BJ (cell line): ENCODE measurements at regions of chr12 and their contacts with region 1.

Region 1: GRCh38 chr12:27751386-27752047 is 28.5 kb upstream of the KLHL42 start:
- DNase-seq: no peak
- H3K4me3 ChIP-seq: no peak overlapping the region
- H3K27me3 ChIP-seq: no peaks in the 10 kb centered on the region
- CTCF ChIP-seq: no peak

Region 2: GRCh38 chr12:27534060-27534764 is 217.3 kb before region 1 on chr12:
- CTCF ChIA-PET with region 1: no interaction called
- POLR2A ChIA-PET with region 1: no interaction called
- DNase-seq: no peak
- H3K4me3 ChIP-seq: no peak overlapping the region
- H3K27me3 ChIP-seq: no peaks in the 10 kb centered on the region
- CTCF ChIP-seq: no peak

Region 3: GRCh38 chr12:27794818-27795584 is 43.5 kb after region 1 on chr12:
- CTCF ChIA-PET with region 1: no interaction called
- POLR2A ChIA-PET with region 1: interaction called, 10 read pairs
- DNase-seq: no peak
- H3K4me3 ChIP-seq: no peak overlapping the region
- H3K27me3 ChIP-seq: no peaks in the 10 kb centered on the region
- CTCF ChIP-seq: no peak